HEK293 (cell line): ENCODE measurements at regions of chr7 and their contacts with region 1.

Region 1: GRCh38 chr7:1065263-1066260 is 21.2 kb downstream of the GPR146 start:
- H3K4me3 ChIP-seq: no peak overlapping the region
- H3K27ac ChIP-seq: no peak overlapping the region
- H3K4me1 ChIP-seq: no peaks in the 10 kb centered on the region
- CTCF ChIP-seq: peak; percentile 87

Region 2: DNA sequence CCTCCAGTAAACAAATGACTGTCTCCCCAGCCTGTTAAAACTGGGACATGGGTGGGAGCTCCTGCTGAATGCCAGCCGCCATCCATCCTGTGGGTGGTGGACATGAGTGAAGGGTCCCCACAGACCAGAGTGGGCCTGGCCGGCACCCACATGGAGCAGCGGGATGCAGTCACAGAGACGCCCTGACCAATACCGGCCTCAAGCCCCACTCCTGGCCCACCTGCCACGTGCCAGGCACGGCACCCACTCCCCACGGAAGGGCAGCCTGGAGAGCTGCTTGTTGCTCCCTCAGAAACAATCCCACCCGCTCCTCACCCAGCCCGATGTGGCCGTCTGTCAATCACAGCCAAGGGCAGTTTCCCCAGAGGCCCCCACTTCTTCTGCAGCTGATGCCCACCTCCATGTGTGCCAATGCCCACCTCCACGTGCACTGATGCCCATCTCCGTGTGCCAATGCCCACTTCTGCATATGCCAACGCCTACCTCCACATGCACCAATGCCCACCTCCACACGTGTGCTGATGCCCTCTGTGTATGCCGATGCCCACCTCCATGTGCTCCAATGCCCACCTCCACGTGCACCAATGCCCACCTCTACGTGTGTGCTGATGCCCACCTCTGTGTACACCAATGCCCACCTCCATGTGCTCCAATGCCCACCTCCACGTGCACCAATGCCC is 381.9 kb before region 1 on chr7:
- CTCF ChIA-PET with region 1: no interaction called
- POLR2A ChIA-PET with region 1: no interaction called
- H3K4me3 ChIP-seq: no peak overlapping the region
- H3K27ac ChIP-seq: no peak overlapping the region
- H3K4me1 ChIP-seq: no peaks in the 10 kb centered on the region
- CTCF ChIP-seq: no peak

Region 3: DNA sequence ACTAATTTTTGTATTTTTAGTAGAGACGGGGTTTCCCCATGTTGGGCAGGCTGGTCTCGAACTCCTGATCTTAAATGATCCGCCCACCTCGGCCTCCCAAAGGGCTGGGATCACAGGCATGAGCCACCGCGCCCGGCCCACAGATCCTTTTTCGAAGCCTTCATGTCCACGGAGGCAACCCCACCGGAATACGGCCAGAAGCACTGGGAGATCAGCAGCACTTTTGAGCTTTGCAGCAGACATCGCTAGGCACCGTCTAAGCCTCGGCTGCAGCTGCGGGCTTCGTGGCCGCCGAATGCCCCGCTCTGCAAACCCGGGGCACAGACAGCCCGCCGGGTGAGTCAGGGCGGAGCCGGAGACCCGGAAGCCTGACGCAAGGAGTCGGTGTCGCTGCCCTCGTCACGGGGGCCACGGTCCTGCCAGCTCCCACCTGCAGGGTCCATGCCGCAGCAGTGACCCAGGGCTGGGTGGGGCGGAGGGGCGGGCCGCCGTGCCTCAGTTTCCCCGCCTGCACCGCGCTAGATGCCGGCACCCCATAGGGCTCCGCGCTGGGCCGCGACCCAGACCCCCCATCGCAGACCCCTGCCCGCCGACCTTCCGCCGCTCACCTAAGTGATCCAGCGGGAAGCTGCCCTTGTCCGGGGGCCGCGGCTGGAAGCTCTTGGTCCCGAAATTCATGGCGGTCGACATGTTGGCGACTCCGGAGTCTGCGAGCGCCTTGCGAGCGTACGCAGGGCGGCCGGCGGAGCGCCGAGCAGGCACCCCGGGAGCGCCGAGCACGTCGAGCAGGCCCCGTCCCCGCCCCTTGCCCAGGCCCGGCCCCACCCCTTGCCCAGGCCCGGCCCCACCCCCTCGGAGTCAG is 90.5 kb before region 1 on chr7 and contains the start of gene COX19:
- CTCF ChIA-PET with region 1: interaction called, 12 read pairs
- POLR2A ChIA-PET with region 1: no interaction called
- H3K4me3 ChIP-seq: peak within 1 kb of the TSS; percentile 100
- H3K27ac ChIP-seq: peak within 1 kb of the TSS; percentile 85
- H3K4me1 ChIP-seq: no peaks in the 10 kb centered on the region
- CTCF ChIP-seq: no peak

Region 4: DNA sequence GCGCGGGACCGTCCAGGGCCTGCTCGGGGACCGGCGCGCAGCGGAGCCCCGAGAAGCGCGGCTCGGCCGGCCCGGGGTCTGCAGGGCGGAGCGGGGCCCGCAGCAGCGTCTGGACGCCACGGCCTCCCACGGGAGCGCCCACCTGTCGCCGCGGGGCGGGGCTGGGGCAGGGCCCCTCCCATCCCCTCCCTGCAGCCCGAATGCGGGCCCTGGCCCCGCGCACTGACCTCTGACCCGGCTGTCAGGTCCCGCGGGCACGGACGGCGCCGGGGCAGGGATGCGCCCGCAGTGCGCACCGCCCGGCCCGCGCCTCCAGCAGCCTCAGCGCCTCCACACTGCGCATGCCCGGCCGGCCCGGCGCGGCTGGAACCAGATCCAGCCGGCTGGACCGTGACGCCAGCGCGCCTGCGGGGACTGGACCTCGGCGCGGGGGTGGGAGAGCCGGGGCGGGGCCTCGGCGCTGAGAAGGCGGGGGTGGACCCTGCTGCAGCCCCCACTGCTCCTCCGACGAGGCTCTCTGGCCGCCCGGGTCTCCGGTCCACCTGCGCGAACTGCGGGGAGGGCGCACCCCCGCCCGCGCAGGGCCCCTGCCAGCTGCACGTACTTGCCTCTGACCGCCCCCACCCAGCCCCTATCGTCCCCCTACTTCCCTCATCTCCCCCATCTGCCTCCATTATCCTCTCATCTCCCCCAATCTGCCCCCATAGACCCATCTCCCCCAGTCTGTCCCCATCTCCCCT is 37.4 kb before region 1 on chr7:
- CTCF ChIA-PET with region 1: interaction called, 14 read pairs
- POLR2A ChIA-PET with region 1: no interaction called
- H3K4me3 ChIP-seq: peak overlapping the region; percentile 67
- H3K27ac ChIP-seq: peak overlapping the region; percentile 76; the same call in 1 of the 2 replicates
- H3K4me1 ChIP-seq: peaks cover 10% of the 10 kb centered on the region; the same call in 1 of the 2 replicates
- CTCF ChIP-seq: no peak

Region 5: DNA sequence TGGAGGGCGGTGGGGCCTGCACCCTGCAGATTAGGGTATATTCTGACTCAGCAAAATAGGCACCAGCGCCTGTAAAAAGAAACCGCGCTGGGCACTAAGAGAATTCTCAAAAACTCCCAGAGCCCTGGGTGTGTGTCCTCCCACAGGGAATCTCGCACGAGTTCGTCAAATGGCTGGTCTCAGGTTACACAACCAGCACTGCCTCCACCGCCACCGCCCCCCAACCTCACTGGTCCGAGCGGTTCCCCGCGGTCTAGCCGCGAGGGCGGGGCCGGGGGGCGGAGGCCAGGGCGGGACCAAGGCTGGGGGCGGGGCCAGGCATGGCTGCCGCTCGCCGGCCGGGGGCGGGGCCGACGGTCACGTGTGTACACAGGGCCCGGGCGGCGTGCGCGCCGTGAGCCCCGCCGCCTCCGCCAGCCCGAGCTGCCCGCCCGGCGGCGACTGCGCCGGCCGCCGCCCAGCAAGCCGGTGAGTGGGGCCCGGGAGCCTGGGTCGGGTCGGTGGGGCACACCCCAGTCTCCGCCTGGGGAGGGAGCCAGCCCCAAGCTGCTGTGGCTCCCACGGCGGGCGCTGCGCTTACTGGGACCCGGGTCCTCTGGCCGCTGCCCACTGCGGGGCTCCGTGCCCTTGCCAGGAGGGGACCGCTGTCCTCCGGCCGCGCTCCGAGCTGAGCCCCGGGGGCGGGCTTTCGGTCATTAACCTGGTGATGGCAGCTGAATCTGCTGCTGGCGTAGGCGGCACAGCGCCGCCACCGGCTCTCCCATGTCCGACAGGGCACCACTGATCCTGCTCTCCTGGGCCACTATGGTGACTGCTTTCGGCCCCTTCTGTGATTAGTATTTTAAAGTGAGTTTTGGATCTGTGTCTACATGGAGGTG is 21.1 kb before region 1 on chr7 and contains the start of gene GPR146:
- CTCF ChIA-PET with region 1: interaction called, 15 read pairs
- POLR2A ChIA-PET with region 1: no interaction called
- H3K4me3 ChIP-seq: peak within 1 kb of the TSS; percentile 61
- H3K27ac ChIP-seq: peak within 1 kb of the TSS; percentile 63
- H3K4me1 ChIP-seq: peaks cover 8% of the 10 kb centered on the region
- CTCF ChIP-seq: peak; percentile 79

Region 6: DNA sequence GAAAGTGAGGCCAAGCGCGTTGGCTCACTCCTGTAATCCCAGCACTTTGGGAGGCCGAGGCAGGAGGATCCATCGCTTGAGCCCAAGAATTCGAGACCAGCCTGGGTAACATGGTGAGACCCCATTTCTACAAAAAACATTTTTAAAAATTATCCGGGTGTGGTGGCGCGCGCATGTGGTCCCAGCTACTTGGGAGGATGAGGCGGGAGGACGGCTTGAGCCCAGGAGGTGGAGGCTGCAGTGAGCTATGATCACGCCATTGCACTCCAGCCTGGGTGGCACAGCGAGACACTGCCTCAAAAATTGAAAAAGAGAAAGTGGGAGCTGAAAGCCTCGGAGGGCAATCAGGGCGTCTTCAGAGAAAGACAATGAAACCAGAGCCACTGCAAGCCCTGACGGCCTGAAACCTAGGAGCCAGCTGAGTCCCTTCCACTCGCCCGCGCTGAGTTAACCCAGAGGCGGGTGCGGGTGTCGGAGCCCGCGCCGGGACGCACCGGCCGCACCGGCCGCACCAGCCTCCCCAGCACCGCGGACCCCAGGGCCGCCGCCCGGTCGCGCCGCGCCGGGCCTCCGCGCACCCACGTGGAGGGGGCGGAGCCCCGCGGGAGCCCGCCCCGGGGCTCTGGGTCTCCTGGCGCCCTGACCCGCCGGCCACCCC is 72.1 kb after region 1 on chr7:
- CTCF ChIA-PET with region 1: interaction called, 12 read pairs
- POLR2A ChIA-PET with region 1: no interaction called
- H3K4me3 ChIP-seq: peak overlapping the region; percentile 74
- H3K27ac ChIP-seq: peak overlapping the region; percentile 13; the same call in 1 of the 2 replicates
- H3K4me1 ChIP-seq: no peaks in the 10 kb centered on the region; the same call in 1 of the 2 replicates
- CTCF ChIP-seq: no peak